Mammary epithelial cell (primary cell): ENCODE measurements at regions of chr6 and their contacts with region 1.

Region 1: DNA sequence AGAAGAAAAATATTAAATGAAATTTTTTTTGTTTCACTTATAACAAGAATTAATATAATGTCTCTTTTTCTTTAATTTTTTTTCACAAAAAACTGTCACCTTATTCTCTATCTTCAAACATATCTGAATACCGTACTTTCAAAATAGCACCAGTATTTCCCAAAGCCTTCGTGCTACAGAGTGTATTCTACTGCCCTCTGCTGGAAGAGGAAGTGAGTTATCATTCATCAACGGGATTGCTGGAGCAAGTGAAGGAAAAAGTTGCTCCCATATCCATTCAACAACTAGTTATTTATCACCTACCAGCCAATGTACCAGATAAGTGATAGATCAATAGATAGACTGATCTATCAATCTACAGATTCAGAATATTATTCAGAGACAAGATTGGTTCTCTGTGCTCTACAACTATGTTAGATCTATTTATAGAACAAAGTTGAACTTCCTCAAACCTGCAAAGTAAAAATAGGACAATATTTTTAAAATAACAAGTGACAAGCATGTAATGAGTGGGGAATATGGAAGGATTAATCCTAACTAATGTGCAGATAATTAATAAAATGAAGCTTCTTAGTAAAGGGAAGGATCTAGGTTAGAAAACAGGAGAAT is 26.7 kb upstream of the TFAP2B start:
- DNase-seq: peak; percentile 33
- H3K4me3 ChIP-seq: no peak overlapping the region
- H3K27ac ChIP-seq: no peak overlapping the region
- H3K4me1 ChIP-seq: peaks cover 7% of the 10 kb centered on the region
- H3K27me3 ChIP-seq: peaks cover 2% of the 10 kb centered on the region
- CTCF ChIP-seq: peak; percentile 61 to 86

Region 2: GRCh38 chr6:50655848-50656453 is 136.1 kb before region 1 on chr6:
- CTCF ChIA-PET with region 1: no interaction called
- dilution Hi-C with region 1: no loop called
- in situ Hi-C with region 1: loop called (anchors 5 to 10 kb)
- intact Hi-C with region 1: loop called (anchors 1 kb)
- DNase-seq: no peak
- H3K4me3 ChIP-seq: no peak overlapping the region
- H3K27ac ChIP-seq: no peak overlapping the region
- H3K4me1 ChIP-seq: no peaks in the 10 kb centered on the region
- H3K27me3 ChIP-seq: no peaks in the 10 kb centered on the region
- CTCF ChIP-seq: peak; percentile 59 to 75